Adrenal gland (tissue), 19 donors: ENCODE measurements at regions of chr6 and their contacts with region 1.

Region 1: DNA sequence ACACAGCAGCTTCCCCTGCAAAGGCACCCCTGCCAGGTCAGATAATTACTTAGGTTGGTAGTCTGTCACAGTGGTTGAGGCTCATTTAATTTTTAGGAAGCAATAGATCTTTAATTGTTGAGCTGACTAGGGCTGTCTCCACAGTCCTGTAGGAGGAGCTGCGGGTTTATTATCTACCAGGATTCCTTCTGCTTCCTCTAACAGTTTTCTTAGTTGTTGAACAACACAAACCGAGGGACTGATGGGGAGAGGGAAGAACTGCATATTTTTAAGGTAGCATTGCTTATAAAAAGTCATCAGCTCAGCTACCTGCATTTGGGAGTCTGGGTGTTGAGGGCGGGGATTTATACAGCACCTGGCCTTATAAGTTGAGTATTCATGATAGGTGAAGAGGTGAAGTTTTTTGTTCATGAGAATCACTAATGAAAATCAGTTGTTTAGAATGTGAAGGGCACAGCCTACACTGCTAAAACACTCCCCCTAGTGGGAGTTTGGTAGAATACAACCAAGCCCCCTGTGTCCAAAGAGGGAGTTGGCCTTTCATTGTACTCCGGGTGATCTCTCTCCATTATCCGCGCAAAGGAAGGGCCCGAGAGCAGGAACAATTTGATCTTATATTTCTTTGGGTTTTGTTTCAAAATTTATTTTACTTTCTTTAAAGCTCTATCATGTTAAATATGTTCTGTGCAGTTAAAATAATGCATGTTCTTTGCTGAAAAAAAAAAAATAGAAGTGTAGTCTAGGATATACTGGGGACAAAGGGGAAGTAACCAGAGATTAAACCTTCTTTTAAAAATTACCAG is 69.6 kb downstream of the SSR1 start:
- DNase-seq: peak in 6 of 7 donors; percentile 37 to 77 (median 65)
- H3K4me3 ChIP-seq: no peak overlapping the region
- H3K27ac ChIP-seq: peak overlapping the region; percentile 5 to 71 (median 48)
- H3K4me1 ChIP-seq: peaks cover 8 to 27% of the 10 kb centered on the region in 2 donors
- H3K27me3 ChIP-seq: no peaks in the 10 kb centered on the region
- CTCF ChIP-seq: peak; percentile 79 to 92 (median 90)
- POLR2A ChIP-seq: no peak

Region 2: DNA sequence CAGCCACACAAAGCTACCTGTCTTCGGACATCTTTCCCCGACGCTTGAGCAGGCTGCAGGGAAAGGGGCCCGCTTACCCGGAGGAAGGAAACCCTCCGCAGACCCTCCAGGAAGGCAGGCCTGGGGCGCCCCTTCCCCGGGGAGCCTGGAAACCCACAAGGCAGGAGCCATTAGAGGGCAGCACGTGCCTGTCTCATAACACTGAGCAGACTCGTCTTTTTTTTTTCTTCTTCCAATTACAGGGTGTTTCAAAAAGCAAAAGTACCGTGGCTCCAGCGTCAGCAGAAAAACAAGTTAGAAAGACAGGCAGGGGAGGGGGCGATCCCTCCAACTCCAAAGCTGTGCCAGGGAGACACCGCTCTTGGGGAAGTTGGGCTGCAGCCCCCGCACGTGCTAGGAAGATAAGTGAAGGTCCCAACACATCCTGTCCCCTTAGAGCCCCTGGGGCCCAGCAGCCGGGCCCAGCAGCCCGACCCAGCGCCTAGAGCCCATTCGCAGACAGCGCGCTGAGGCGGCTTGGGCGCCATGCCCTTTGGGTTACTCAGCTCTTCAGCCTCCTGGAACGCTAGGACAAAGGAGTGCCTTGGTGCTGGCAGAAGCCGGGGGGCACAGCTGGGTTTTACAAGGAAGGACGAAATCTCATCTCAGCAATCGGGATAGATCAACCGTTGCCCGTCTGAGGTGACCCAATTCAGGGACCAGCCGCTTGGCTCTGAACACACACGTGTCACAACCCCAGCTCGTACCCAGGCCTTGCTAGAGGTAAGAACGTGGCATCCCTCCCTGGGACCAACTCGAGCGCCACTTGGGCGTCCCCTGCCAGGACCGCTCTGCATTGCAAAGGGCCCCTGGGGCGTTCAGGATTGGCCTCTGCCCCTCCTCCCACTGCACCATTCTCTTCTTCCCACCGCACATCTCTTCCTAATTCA is 518.6 kb before region 1 on chr6:
- intact Hi-C with region 1: loop called (anchors 10 kb)
- DNase-seq: peak; percentile 77 to 90 (median 82)
- H3K4me3 ChIP-seq: peak overlapping the region in 2 of 4 donors; percentile 17 to 52
- H3K27ac ChIP-seq: peak overlapping the region; percentile 83 to 91 (median 89)
- H3K4me1 ChIP-seq: peaks cover 12 to 20% of the 10 kb centered on the region in 2 donors
- H3K27me3 ChIP-seq: no peaks in the 10 kb centered on the region
- CTCF ChIP-seq: peak; percentile 12 to 81 (median 65)
- POLR2A ChIP-seq: no peak

Region 3: GRCh38 chr6:6960571-6961251 is 282.7 kb before region 1 on chr6:
- intact Hi-C with region 1: no loop called
- DNase-seq: no peak
- H3K4me3 ChIP-seq: no peak overlapping the region
- H3K27ac ChIP-seq: no peak overlapping the region
- H3K4me1 ChIP-seq: peaks cover 0 to 6% of the 10 kb centered on the region in 2 donors
- H3K27me3 ChIP-seq: no peaks in the 10 kb centered on the region
- CTCF ChIP-seq: no peak
- POLR2A ChIP-seq: no peak

Region 4: GRCh38 chr6:7107578-7108195 is 135.7 kb before region 1 on chr6 and contains the start of gene RREB1:
- intact Hi-C with region 1: loop called in 1 of 2 experiments (anchors 5 kb)
- DNase-seq: peak; percentile 59 to 80 (median 68)
- H3K4me3 ChIP-seq: peak within 1 kb of the TSS; percentile 66 to 87 (median 84)
- H3K27ac ChIP-seq: peak within 1 kb of the TSS; percentile 77 to 97 (median 89)
- H3K4me1 ChIP-seq: peaks cover 5 to 32% of the 10 kb centered on the region in 2 donors
- H3K27me3 ChIP-seq: no peaks in the 10 kb centered on the region
- CTCF ChIP-seq: no peak
- POLR2A ChIP-seq: peak in 1 of 2 donors; percentile 61
- total RNA-seq, gene RREB1: 14.8 to 79.5 (median 54.3) TPM

Region 5: DNA sequence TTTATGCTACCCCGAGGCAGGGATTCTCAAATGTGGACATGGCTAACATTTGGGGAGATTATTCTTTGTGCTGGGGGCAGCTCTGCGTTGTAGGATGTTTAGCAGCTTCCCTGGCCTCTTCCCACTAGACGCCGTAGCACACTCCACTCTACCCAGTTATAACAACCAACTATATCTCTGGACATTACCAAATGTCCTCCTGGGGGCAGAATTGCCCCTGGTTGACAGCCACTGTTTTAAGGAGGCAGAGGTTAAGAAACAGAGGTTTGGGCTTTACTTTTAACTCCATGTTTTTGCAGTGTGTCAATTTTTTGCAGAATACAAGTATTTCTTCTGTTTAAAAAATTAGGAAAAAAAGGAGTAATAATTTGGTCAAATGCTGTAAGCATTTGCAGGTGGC is 426.4 kb after region 1 on chr6:
- intact Hi-C with region 1: no loop called
- DNase-seq: no peak
- H3K4me3 ChIP-seq: no peak overlapping the region
- H3K27ac ChIP-seq: no peak overlapping the region
- H3K4me1 ChIP-seq: no peaks in the 10 kb centered on the region
- H3K27me3 ChIP-seq: no peaks in the 10 kb centered on the region
- CTCF ChIP-seq: no peak
- POLR2A ChIP-seq: no peak